K562 (cell line): ENCODE measurements at regions of chrX and their contacts with region 1.

Region 1: DNA sequence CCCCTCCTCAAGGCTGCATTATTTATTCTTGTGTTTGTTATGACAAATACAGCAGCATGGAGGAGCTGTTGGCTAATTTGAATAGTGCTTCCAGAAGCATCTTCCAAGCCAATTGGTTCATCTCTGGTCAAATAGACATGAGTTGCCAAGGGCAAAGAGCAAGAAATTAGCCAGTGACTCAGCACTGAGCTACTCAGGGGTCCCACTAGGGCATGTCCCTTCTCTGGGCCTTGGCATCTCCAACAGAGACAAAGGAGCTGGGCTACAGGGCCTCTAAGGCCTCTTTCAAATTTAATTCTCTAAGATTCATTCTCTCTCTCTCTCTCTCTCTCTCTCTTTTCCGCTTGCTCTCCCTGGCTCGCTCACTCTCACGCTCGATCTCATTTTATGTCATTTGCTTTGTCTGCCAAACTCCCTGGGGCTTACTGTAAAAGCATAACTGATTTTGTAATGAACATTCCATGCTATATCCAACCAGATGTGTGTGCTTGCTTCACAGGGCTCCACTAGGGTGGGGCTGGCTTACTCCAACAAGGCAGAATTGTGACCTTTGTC is 86.7 kb upstream of the MAGEA4 start:
- DNase-seq: peak in 1 of 4 experiments; percentile 8
- ATAC-seq: peak; percentile 47; the same call in 2 of the 3 replicates
- H3K4me3 ChIP-seq: no peak overlapping the region
- H3K27ac ChIP-seq: no peak overlapping the region
- H3K4me1 ChIP-seq: no peaks in the 10 kb centered on the region; a peak in 1 of 5 replicates
- H3K27me3 ChIP-seq: peaks cover 0 to 6% of the 10 kb centered on the region in 2 experiments; a peak in 3 of 5 replicates
- CTCF ChIP-seq: peak; percentile 13 to 44 (median 39); a peak in 4 of 6 replicates
- EP300 ChIP-seq: no peak
- POLR2A ChIP-seq: no peak
- RAD21 ChIP-seq: peak; percentile 50 to 68

Region 2: GRCh38 chrX:151082076-151082948 is 743.7 kb before region 1 on chrX:
- CTCF ChIA-PET with region 1: no interaction called
- POLR2A ChIA-PET with region 1: no interaction called
- in situ Hi-C with region 1: no loop called
- intact Hi-C with region 1: no loop called
- DNase-seq: peak; percentile 70 to 73 (median 71)
- ATAC-seq: peak; percentile 98
- H3K4me3 ChIP-seq: no peak overlapping the region
- H3K27ac ChIP-seq: no peak overlapping the region
- H3K4me1 ChIP-seq: peaks cover 0 to 7% of the 10 kb centered on the region in 2 experiments; a peak in 2 of 5 replicates
- H3K27me3 ChIP-seq: peaks cover 0 to 12% of the 10 kb centered on the region in 2 experiments; a peak in 3 of 5 replicates
- CTCF ChIP-seq: peak; percentile 85 to 91 (median 88)
- EP300 ChIP-seq: no peak
- POLR2A ChIP-seq: no peak
- RAD21 ChIP-seq: peak; percentile 85 to 91

Region 3: GRCh38 chrX:152632445-152633097 is 806.6 kb after region 1 on chrX:
- CTCF ChIA-PET with region 1: interaction called, 8 read pairs
- POLR2A ChIA-PET with region 1: no interaction called
- in situ Hi-C with region 1: no loop called
- intact Hi-C with region 1: loop called (anchors 10 kb)
- DNase-seq: peak; percentile 25 to 60 (median 45)
- ATAC-seq: 0 out of 3 replicates have a peak, but pooled peaks have one; percentile 50
- H3K4me3 ChIP-seq: no peak overlapping the region
- H3K27ac ChIP-seq: no peak overlapping the region
- H3K4me1 ChIP-seq: peaks cover under 1 to 8% of the 10 kb centered on the region in 2 experiments; a peak in 4 of 5 replicates
- H3K27me3 ChIP-seq: no peaks in the 10 kb centered on the region
- CTCF ChIP-seq: peak; percentile 61 to 75 (median 72)
- EP300 ChIP-seq: no peak
- POLR2A ChIP-seq: no peak
- RAD21 ChIP-seq: peak; percentile 67 to 74